ENCODE measurements at regions of chr1 and their contacts with region 1.

Region 1: GRCh38 chr1:179002552-179003345 is 22.9 kb upstream of the FAM20B start:
- DNase-seq: peak; percentile 89
- ATAC-seq: peak; percentile 88

Region 2: GRCh38 chr1:178532392-178532791 is 470.4 kb before region 1 on chr1:
- intact Hi-C with region 1: loop called (anchors 10 kb)
- DNase-seq: peak; percentile 90
- ATAC-seq: peak; percentile 87

Region 3: DNA sequence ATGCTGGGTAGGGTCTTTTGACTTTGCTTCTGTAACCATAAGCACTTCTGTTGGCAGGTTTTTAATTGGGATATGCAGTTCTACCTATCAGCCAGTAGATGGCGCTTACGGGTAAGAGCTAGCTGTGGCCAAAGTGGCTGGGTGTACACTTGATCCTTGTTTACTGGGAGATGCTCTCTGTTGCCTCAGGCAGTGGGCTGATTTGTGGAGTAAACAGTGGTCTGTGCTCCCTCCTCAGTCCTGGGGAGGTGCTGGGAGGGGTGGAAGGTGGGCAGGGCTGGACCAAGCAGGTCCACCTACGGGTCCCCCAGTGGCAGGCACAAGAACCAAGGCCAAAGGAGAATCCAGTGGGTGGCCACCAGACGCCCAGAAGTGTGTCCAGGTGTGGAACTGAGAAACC is 234.3 kb before region 1 on chr1:
- intact Hi-C with region 1: loop called (anchors 5 kb)
- DNase-seq: no peak
- ATAC-seq: peak; percentile 34